HEK293T (cell line): ENCODE measurements at regions of chr10 and their contacts with region 1.

Region 1: GRCh38 chr10:97792141-97792721 is 20.4 kb upstream of the SFRP5 start:
- DNase-seq: peak; percentile 87

Region 2: GRCh38 chr10:97572214-97572989 is 219.8 kb before region 1 on chr10 and contains the start of gene ANKRD2:
- CTCF ChIA-PET with region 1: no interaction called
- POLR2A ChIA-PET with region 1: no interaction called
- DNase-seq: peak; percentile 86

Region 3: GRCh38 chr10:97869091-97870042 is 77.1 kb after region 1 on chr10:
- CTCF ChIA-PET with region 1: interaction called, 15 read pairs
- POLR2A ChIA-PET with region 1: no interaction called
- DNase-seq: peak; percentile 92